Activated naive CD4-positive, alpha-beta T cell treated with anti-CD3 and anti-CD28 coated beads for 36 hours (primary cell): ENCODE measurements at regions of chr19 and their contacts with region 1.

Region 1: DNA sequence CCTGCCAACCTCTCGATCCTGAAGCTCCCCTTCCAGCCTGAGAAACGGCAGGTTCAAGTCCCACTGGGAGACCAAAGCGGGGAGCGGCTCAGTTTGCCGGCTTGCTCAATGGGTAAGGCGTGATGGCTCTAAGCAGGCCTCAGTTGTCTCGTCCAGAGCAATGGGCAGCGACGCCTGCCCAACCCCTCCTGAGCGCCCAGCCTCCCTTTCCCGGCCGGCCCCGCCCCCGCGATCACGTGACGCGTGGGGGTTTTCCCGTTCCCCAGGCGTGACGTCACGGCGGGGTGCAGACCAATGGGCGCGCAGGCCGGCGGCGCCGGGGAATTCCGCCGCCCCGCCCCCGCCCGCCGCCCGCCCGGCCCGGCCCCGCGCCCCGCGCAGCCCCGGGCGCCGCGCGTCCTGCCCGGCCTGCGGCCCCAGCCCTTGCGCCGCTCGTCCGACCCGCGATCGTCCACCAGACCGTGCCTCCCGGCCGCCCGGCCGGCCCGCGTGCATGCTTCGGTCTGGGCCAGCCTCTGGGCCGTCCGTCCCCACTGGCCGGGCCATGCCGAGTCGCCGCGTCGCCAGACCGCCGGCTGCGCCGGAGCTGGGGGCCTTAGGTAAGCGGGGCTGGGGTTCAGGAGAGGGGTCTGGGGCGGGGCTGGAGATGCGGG is at the start of gene RELB:
- DNase-seq: peak; percentile 95
- H3K4me3 Mint-ChIP-seq: peak within 1 kb of the TSS; percentile 95
- H3K27ac Mint-ChIP-seq: peak within 1 kb of the TSS; percentile 98
- H3K4me1 Mint-ChIP-seq: peaks cover 17% of the 10 kb centered on the region
- H3K27me3 Mint-ChIP-seq: no peaks in the 10 kb centered on the region
- total RNA-seq, gene RELB: 55.4 to 57.3 TPM

Region 2: GRCh38 chr19:44752816-44753618 is 248.2 kb before region 1 on chr19:
- CTCF ChIA-PET with region 1: no interaction called
- intact Hi-C with region 1: loop called (anchors 5 kb)
- DNase-seq: peak; percentile 98
- H3K4me3 Mint-ChIP-seq: peak overlapping the region; percentile 93
- H3K27ac Mint-ChIP-seq: peak overlapping the region; percentile 97
- H3K4me1 Mint-ChIP-seq: peaks cover 59% of the 10 kb centered on the region
- H3K27me3 Mint-ChIP-seq: no peaks in the 10 kb centered on the region

Region 3: DNA sequence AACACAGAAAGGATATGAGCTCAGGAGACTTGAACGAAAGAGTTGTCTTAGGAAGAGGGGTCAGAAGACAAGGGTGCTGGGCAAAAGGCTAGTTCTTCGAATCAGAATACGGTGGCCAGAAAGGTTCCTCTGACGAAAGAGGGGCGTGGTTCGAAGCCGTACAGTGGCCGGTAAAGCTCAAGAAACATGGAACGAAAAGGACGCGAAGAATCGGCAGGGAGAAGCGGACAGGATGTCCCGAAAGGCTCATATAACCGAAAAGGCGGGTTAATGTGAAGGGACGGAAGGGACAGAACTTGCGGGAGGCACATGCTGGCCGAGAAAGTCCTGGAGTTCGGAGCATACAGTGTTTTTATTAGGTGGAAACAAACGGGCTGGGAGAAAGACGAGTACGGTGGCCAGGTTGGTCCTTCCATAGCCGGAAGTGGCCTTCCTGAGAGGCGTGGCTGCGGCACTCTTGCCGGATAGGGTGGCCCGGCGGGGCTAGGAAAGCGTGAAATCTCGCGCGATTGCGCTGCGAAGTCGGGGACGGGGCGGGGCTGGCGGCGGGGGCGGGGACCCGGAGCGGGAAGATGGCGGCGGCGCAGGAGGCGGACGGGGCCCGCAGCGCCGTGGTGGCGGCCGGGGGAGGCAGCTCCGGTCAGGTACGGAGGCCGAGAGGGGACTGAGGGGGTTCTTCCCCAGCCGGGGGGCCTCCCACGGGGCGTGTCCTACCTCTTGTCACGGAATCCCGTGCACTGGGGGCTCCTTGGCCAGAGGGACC is 46.2 kb before region 1 on chr19 and contains the start of gene CLPTM1:
- CTCF ChIA-PET with region 1: no interaction called
- intact Hi-C with region 1: loop called (anchors 1 kb)
- DNase-seq: peak; percentile 98
- H3K4me3 Mint-ChIP-seq: peak within 1 kb of the TSS; percentile 98
- H3K27ac Mint-ChIP-seq: peak within 1 kb of the TSS; percentile 98
- H3K4me1 Mint-ChIP-seq: peaks cover 48% of the 10 kb centered on the region
- H3K27me3 Mint-ChIP-seq: no peaks in the 10 kb centered on the region
- total RNA-seq, gene CLPTM1: 32.4 to 34.6 TPM

Region 4: DNA sequence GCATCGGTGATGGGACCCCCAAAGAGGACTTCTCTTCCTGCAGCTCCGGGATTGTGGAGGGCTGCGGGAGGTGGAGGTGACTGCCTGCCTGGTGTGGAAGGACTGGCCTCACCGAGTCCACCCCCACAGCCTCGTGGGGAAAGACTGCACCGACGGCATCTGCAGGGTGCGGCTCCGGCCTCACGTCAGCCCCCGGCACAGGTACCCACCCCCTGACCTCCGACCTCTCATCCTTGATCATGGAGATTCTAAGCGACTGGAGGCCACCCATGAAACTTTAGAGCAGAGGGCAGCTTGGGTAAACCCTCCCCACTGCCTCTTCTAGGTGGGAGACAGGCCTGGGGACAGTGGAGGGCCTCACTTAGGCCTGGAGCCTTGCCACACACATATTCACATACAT is 20.8 kb after region 1 on chr19:
- CTCF ChIA-PET with region 1: no interaction called
- intact Hi-C with region 1: no loop called
- DNase-seq: no peak
- H3K4me3 Mint-ChIP-seq: no peak overlapping the region
- H3K27ac Mint-ChIP-seq: no peak overlapping the region
- H3K4me1 Mint-ChIP-seq: no peaks in the 10 kb centered on the region
- H3K27me3 Mint-ChIP-seq: no peaks in the 10 kb centered on the region

Region 5: DNA sequence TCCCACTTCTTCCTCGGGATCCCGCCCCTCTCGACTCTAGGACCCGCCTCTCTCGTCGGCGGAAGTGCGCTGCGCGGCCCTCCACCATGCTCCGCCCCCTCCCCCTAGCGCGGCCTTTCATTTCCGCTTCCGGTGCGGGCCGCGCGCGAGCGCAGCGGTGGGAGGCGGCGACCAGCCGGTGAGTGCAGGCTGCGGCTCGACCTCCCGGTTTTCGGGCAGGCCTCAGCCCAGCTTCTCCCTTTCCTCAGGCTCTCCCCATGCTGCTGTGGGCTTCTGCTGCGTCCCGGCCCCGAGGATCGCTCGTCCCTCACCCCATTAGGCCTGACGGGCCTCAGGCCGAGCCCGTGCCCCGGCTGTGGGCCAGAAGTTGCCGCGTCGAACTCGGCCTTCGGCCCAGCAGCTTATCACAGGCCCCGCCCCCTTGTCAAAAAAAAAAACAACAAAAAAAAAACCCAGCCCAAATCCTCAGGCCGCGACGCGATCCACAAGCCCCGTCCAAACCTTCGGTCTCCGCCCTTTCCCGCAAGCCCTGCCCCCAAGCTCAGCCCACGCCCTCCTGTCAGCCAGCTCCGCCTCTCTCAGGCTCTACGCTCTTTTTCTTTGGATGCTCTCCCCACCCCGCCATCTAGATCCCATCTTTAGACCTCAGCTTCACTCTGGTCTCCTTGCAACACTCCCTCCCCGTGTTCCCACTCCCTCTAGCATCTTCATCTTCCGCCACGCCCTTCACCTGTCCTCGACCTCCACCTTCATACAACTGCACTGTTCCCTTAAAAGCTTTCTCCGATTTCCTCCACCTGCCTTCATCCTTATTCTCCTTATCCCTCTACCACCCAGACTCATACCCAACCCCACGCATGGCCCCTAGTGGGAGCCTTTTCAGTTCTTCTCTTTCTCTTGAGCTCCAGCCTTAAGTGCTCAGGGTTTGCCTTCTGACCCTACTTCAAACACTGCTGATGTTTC is 38.0 kb after region 1 on chr19 and contains the start of gene CLASRP:
- CTCF ChIA-PET with region 1: no interaction called
- intact Hi-C with region 1: loop called (anchors 1 kb)
- DNase-seq: peak; percentile 91
- H3K4me3 Mint-ChIP-seq: peak within 1 kb of the TSS; percentile 91
- H3K27ac Mint-ChIP-seq: peak within 1 kb of the TSS; percentile 90
- H3K4me1 Mint-ChIP-seq: peaks cover 33% of the 10 kb centered on the region
- H3K27me3 Mint-ChIP-seq: no peaks in the 10 kb centered on the region
- total RNA-seq, gene CLASRP: 106 to 113 TPM

Region 6: GRCh38 chr19:45059278-45059965 is 58.2 kb after region 1 on chr19:
- CTCF ChIA-PET with region 1: interaction called, 4 read pairs
- intact Hi-C with region 1: loop called (anchors 5 kb)
- DNase-seq: peak; percentile 90
- H3K4me3 Mint-ChIP-seq: no peak overlapping the region
- H3K27ac Mint-ChIP-seq: peak overlapping the region; percentile 32
- H3K4me1 Mint-ChIP-seq: no peaks in the 10 kb centered on the region
- H3K27me3 Mint-ChIP-seq: no peaks in the 10 kb centered on the region

Region 7: GRCh38 chr19:45079063-45079910 is 78.1 kb after region 1 on chr19 and contains the start of gene GEMIN7:
- CTCF ChIA-PET with region 1: no interaction called
- intact Hi-C with region 1: loop called (anchors 5 kb)
- DNase-seq: peak; percentile 82
- H3K4me3 Mint-ChIP-seq: peak within 1 kb of the TSS; percentile 96
- H3K27ac Mint-ChIP-seq: peak within 1 kb of the TSS; percentile 76
- H3K4me1 Mint-ChIP-seq: peaks cover 50% of the 10 kb centered on the region
- H3K27me3 Mint-ChIP-seq: no peaks in the 10 kb centered on the region
- total RNA-seq, gene GEMIN7: 14.7 to 15.4 TPM

Region 8: DNA sequence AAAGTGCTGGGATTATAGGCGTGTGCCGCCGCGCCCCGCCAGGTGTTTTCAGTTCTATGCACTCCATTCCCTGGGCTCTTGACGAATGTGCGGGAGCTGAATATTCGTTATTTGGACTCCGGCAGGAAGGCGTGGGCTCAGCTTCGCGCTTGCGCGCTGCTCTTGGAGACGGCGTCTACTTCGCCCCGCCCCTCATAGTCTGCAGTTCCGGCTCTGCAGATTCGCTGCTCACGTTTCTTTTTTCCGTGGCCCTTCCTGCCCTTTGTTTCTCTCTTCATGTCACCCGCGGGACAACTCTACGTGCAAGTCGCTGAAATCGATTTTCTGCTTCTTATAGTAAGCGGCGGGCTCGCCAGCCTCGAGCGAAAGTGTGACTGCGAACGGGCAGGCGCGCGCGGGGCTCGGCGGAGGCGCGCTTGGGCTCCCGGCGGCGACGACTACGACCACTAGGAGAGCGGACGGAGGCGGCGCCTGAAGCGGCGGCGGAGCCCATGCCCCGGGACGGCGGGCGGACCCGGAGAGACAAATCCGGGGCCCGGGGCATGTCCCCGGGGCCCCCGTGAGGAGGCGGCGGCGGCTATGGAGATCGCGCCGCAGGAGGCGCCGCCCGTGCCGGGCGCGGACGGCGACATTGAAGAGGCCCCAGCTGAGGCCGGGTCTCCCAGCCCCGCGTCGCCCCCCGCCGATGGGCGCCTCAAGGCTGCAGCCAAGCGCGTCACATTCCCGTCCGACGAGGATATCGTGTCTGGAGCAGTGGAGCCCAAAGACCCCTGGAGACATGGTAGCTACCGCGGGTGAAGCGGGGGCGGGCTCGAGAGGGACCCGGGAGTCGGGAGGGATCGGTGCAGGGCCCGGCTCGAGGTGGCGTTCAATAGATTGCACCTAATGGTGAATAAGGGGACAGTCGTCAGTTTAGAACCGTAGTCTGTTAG is 91.8 kb after region 1 on chr19 and contains the start of gene PPP1R37:
- CTCF ChIA-PET with region 1: interaction called, 3 read pairs
- intact Hi-C with region 1: loop called (anchors 1 kb)
- DNase-seq: peak; percentile 95
- H3K4me3 Mint-ChIP-seq: peak within 1 kb of the TSS; percentile 93
- H3K27ac Mint-ChIP-seq: peak within 1 kb of the TSS; percentile 98
- H3K4me1 Mint-ChIP-seq: peaks cover 50% of the 10 kb centered on the region
- H3K27me3 Mint-ChIP-seq: no peaks in the 10 kb centered on the region
- total RNA-seq, gene PPP1R37: 10.2 to 10.3 TPM

Region 9: GRCh38 chr19:45152504-45153338 is 151.5 kb after region 1 on chr19:
- CTCF ChIA-PET with region 1: no interaction called
- intact Hi-C with region 1: no loop called
- DNase-seq: peak; percentile 67
- H3K4me3 Mint-ChIP-seq: peak overlapping the region; percentile 54
- H3K27ac Mint-ChIP-seq: no peak overlapping the region
- H3K4me1 Mint-ChIP-seq: peaks cover 18% of the 10 kb centered on the region
- H3K27me3 Mint-ChIP-seq: peaks cover 27% of the 10 kb centered on the region

Region 10: GRCh38 chr19:45276284-45276687 is 275.1 kb after region 1 on chr19:
- CTCF ChIA-PET with region 1: no interaction called
- intact Hi-C with region 1: no loop called
- DNase-seq: no peak
- H3K4me3 Mint-ChIP-seq: no peak overlapping the region
- H3K27ac Mint-ChIP-seq: no peak overlapping the region
- H3K4me1 Mint-ChIP-seq: no peaks in the 10 kb centered on the region
- H3K27me3 Mint-ChIP-seq: no peaks in the 10 kb centered on the region